CD4-positive, alpha-beta memory T cell (primary cell): ENCODE measurements at regions of chr1 and their contacts with region 1.

Region 1: GRCh38 chr1:152459596-152460528 is 45.8 kb upstream of the CRNN start:
- DNase-seq: peak; percentile 70 to 72 (median 71)
- H3K4me3 ChIP-seq: peak overlapping the region in 1 of 2 donors; percentile 9
- H3K4me3 Mint-ChIP-seq: peak overlapping the region; percentile 61 to 88 (median 80)
- H3K27ac ChIP-seq: peak overlapping the region; percentile 39
- H3K27ac Mint-ChIP-seq: peak overlapping the region; percentile 49 to 97 (median 87)
- H3K4me1 ChIP-seq: peaks cover 15% of the 10 kb centered on the region
- H3K4me1 Mint-ChIP-seq: peaks cover 24 to 36% (median 30%) of the 10 kb centered on the region in 4 donors
- H3K27me3 ChIP-seq: no peaks in the 10 kb centered on the region
- H3K27me3 Mint-ChIP-seq: peaks cover 2 to 4% of the 10 kb centered on the region in 2 donors

Region 2: DNA sequence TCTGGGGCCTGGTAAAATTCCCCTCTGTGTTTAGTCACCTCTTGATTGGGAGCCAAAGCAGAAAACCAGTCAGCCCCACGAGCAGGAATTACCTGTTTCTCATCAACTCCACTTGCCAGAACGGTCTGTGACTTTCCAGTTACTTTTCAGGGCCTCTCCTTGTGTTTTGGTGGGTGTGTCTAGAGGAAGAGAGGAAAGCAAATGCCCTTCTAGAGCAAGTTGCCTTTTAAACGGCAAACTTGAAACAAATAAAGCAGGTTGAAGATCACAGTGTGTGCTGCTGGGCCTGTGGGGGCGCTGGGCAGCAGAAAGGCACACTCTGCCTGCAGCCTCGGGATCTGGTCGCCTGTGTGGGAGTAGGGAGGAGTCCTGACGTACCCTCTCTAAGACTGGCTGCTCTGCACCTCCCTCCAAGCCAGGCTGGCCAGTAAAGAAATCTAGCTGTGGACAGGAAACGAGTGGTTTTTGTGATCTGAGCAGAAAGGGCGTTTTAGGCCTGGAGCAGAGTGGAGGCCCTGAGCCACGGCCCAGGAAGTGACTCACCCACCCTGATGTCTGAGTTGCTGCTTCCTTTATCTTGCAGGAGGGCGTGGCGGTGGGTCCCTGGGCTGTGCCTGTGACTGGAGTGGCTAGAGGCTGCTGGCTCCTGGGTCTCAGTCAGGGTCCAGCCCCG is 412.0 kb before region 1 on chr1:
- CTCF ChIA-PET with region 1: interaction called, 127 read pairs
- POLR2A ChIA-PET with region 1: interaction called, 9 read pairs
- intact Hi-C with region 1: loop called (anchors 1 kb)
- DNase-seq: peak; percentile 81 to 96 (median 83)
- H3K4me3 ChIP-seq: peak overlapping the region; percentile 12 to 27
- H3K4me3 Mint-ChIP-seq: peak overlapping the region; percentile 58 to 91 (median 82)
- H3K27ac ChIP-seq: peak overlapping the region; percentile 83
- H3K27ac Mint-ChIP-seq: peak overlapping the region; percentile 95 to 99 (median 99)
- H3K4me1 ChIP-seq: peaks cover 31% of the 10 kb centered on the region
- H3K4me1 Mint-ChIP-seq: peaks cover 19 to 44% (median 33%) of the 10 kb centered on the region in 4 donors
- H3K27me3 ChIP-seq: no peaks in the 10 kb centered on the region
- H3K27me3 Mint-ChIP-seq: peaks cover 0 to 2% of the 10 kb centered on the region in 2 donors

Region 3: GRCh38 chr1:152189657-152190442 is 270.0 kb before region 1 on chr1:
- CTCF ChIA-PET with region 1: interaction called, 326 read pairs
- POLR2A ChIA-PET with region 1: interaction called, 44 read pairs
- intact Hi-C with region 1: loop called (anchors 1 kb)
- DNase-seq: peak; percentile 67 to 73 (median 68)
- H3K4me3 ChIP-seq: no peak overlapping the region
- H3K4me3 Mint-ChIP-seq: peak overlapping the region; percentile 65 to 88 (median 80)
- H3K27ac ChIP-seq: no peak overlapping the region
- H3K27ac Mint-ChIP-seq: peak overlapping the region in 4 of 7 donors; percentile 43 to 67 (median 46)
- H3K4me1 ChIP-seq: no peaks in the 10 kb centered on the region
- H3K4me1 Mint-ChIP-seq: peaks cover 6 to 7% (median 6%) of the 10 kb centered on the region in 4 donors
- H3K27me3 ChIP-seq: no peaks in the 10 kb centered on the region
- H3K27me3 Mint-ChIP-seq: peaks cover 2 to 6% of the 10 kb centered on the region in 2 donors

Region 4: GRCh38 chr1:152392908-152393307 is 67.0 kb before region 1 on chr1:
- CTCF ChIA-PET with region 1: interaction called, 89 read pairs
- POLR2A ChIA-PET with region 1: no interaction called
- intact Hi-C with region 1: loop called (anchors 5 kb)
- DNase-seq: peak; percentile 74 to 85 (median 82)
- H3K4me3 ChIP-seq: no peak overlapping the region
- H3K4me3 Mint-ChIP-seq: peak overlapping the region; percentile 2 to 93 (median 70)
- H3K27ac ChIP-seq: no peak overlapping the region
- H3K27ac Mint-ChIP-seq: peak overlapping the region; percentile 43 to 94 (median 79)
- H3K4me1 ChIP-seq: peaks cover 44% of the 10 kb centered on the region
- H3K4me1 Mint-ChIP-seq: peaks cover 35 to 47% (median 39%) of the 10 kb centered on the region in 4 donors
- H3K27me3 ChIP-seq: peaks cover 7% of the 10 kb centered on the region
- H3K27me3 Mint-ChIP-seq: peaks cover 12 to 17% of the 10 kb centered on the region in 2 donors

Region 5: DNA sequence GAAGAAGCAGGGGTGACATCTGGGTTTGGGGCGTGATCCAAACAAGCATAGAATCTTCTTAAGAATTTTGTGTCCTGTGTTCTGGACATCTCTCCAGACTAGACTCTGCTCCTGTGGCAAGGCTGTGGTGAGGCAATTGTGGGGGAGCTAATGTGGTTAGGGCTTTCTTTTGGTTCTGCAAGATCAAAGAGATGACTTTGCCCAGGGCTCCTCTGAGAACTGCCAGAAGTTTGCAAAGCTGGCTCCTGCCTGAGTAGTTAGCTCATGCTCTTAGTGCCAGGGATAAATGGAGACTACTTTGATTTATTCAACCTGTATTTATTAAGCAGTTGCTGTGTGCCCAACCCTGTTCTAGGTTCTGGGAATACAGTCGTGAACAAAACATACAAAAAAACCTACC is 11.8 kb before region 1 on chr1:
- CTCF ChIA-PET with region 1: interaction called, 119 read pairs
- POLR2A ChIA-PET with region 1: interaction called, 5 read pairs
- intact Hi-C with region 1: no loop called
- DNase-seq: no peak
- H3K4me3 ChIP-seq: no peak overlapping the region
- H3K4me3 Mint-ChIP-seq: no peak overlapping the region
- H3K27ac ChIP-seq: no peak overlapping the region
- H3K27ac Mint-ChIP-seq: no peak overlapping the region
- H3K4me1 ChIP-seq: peaks cover 7% of the 10 kb centered on the region
- H3K4me1 Mint-ChIP-seq: no peaks in the 10 kb centered on the region
- H3K27me3 ChIP-seq: no peaks in the 10 kb centered on the region
- H3K27me3 Mint-ChIP-seq: peaks cover 0 to 2% of the 10 kb centered on the region in 2 donors